Spleen (tissue), 13 donors: ENCODE measurements at regions of chr2 and their contacts with region 1.

Region 1: DNA sequence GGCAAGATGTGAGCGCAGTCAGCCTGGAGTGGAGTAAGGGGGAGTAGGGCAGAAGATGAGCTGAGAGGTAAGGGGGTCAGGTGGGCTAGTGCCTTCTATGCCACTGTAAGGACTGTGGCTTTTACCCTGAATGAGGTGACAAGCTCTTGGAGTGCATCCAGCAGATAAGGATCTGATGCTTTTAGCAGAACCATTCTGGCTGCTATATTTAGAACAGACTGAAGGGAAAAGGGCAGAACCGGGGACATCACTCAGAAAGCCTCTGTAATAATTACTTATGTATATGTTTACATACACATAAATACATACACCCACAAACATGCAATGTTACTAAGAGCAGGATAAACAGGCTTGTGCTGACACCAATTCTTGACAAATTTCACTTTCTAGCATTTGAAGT is 124.8 kb downstream of the DTNB start:
- DNase-seq: no peak
- H3K4me3 ChIP-seq: no peak overlapping the region
- H3K27ac ChIP-seq: no peak overlapping the region
- H3K4me1 ChIP-seq: peaks cover 0 to 7% (median 0%) of the 10 kb centered on the region in 6 donors
- H3K27me3 ChIP-seq: no peaks in the 10 kb centered on the region
- CTCF ChIP-seq: no peak
- POLR2A ChIP-seq: no peak

Region 2: GRCh38 chr2:24827321-24828237 is 721.0 kb before region 1 on chr2:
- intact Hi-C with region 1: no loop called
- DNase-seq: peak; percentile 87
- H3K4me3 ChIP-seq: no peak overlapping the region
- H3K27ac ChIP-seq: no peak overlapping the region
- H3K4me1 ChIP-seq: peaks cover 0 to 19% (median 5%) of the 10 kb centered on the region in 6 donors
- H3K27me3 ChIP-seq: no peaks in the 10 kb centered on the region
- CTCF ChIP-seq: peak; percentile 81 to 96 (median 89)
- POLR2A ChIP-seq: no peak

Region 3: DNA sequence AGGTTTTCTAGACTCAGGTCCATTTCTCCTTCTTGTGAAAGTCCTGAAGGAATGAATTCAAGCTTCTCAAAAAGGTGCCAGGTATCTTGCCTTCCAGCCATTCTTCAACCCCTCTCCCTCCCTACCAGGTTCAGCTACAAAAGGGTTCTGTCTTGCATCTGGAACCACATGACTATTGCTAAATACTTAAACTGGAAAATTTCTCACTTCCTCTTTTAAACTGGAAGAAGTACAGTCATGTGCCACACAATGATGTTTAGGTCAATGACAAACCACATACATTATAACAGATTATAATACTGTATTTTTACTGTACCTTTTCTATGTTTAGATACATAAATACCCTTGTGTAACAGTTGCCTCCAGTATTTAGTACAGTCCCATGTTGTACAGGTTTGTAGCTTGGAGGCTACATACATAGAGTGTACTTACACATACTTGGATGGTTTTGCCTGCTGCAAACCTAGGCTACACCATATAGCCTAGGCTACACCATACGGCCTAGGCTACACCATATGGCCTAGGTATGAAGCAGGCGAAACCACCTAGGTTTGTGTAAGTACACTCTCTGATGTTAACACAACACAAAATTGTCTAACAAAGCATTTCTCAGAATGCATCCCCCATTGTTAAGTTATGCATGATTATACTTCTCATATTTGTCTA is 64.9 kb before region 1 on chr2:
- intact Hi-C with region 1: loop called (anchors 10 kb)
- DNase-seq: no peak
- H3K4me3 ChIP-seq: no peak overlapping the region
- H3K27ac ChIP-seq: peak overlapping the region in 5 of 8 donors; percentile 23 to 49 (median 42)
- H3K4me1 ChIP-seq: peaks cover 0 to 23% (median 16%) of the 10 kb centered on the region in 6 donors
- H3K27me3 ChIP-seq: no peaks in the 10 kb centered on the region
- CTCF ChIP-seq: no peak
- POLR2A ChIP-seq: no peak

Region 4: DNA sequence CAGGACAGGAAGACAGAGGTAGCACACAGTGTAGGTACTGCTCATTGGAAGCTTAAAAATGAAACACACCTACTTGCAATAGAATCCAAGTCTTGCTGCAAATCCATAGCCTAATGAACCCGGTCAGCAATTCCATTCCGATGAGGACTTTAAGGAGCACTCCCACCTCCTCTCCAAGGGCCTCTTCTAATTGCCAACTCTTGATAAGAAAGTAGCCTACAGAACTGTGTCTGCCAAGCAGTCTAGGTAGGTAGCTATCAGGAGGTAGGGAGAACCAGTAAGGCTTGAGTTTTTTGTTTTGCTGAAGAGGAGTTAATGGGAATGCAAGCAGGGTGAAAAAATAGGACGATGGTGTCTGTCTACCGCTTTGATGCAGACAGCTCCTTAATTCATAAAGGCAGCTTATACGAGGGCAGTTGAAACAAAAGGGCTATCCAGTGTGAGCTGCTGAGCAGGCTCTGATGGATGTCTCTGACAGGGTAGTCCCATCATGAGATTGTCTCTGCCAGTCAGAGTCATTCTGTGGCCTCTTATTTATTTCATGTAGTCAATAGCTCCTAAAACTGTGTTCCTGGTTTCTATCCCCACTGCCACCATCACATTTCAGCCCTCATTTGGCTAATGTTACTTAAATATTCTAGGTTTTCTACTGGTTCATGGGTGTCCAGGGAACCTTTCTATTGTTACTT is 51.2 kb before region 1 on chr2:
- intact Hi-C with region 1: no loop called
- DNase-seq: no peak
- H3K4me3 ChIP-seq: no peak overlapping the region
- H3K27ac ChIP-seq: no peak overlapping the region
- H3K4me1 ChIP-seq: peaks cover 0 to 9% (median 0%) of the 10 kb centered on the region in 6 donors
- H3K27me3 ChIP-seq: no peaks in the 10 kb centered on the region
- CTCF ChIP-seq: no peak
- POLR2A ChIP-seq: no peak

Region 5: DNA sequence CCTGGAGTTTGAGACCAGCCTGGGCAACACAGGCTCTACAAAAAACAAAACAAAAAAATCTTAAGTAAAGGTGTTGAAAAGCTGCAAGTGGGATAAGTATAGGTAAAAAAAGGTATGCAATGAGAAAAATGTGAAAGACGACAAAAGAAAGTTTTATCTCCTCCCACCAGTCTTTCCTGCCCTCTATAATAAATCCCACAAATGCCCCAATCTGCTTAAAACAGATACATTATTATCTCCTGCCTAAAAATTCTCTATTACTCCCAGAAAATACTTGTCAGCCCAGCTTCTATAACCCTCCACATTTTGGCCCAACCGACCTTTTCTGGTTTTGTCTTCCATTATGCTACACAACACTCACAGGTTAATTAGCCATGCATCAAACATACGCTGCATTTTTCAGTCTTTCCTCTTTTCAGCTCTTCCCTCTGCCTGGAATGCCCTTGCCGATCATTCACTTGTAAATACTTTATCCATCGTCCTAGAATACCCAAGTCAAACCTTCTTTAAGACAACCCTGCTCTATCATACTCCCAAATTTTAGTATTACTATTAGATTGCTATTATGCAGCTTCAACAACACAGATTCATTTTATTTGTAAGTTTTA is 318.9 kb after region 1 on chr2:
- intact Hi-C with region 1: no loop called
- DNase-seq: no peak
- H3K4me3 ChIP-seq: no peak overlapping the region
- H3K27ac ChIP-seq: no peak overlapping the region
- H3K4me1 ChIP-seq: peaks cover 0 to 42% (median 4%) of the 10 kb centered on the region in 6 donors
- H3K27me3 ChIP-seq: no peaks in the 10 kb centered on the region
- CTCF ChIP-seq: no peak
- POLR2A ChIP-seq: no peak